Right cardiac atrium (tissue), 5 donors: ENCODE measurements at regions of chr5 and their contacts with region 1.

Region 1: GRCh38 chr5:14264604-14265316 is 121.6 kb downstream of the TRIO start:
- DNase-seq: peak; percentile 92 to 97 (median 96)
- ATAC-seq: peak; percentile 97
- H3K4me3 ChIP-seq: peak overlapping the region; percentile 23
- H3K27ac ChIP-seq: no peak overlapping the region
- H3K4me1 ChIP-seq: peaks cover 18% of the 10 kb centered on the region
- H3K27me3 ChIP-seq: no peaks in the 10 kb centered on the region

Region 2: GRCh38 chr5:14208071-14209021 is 56.4 kb before region 1 on chr5:
- intact Hi-C with region 1: loop called in 1 of 4 experiments (anchors 10 kb)
- DNase-seq: no peak
- ATAC-seq: peak in 1 of 2 donors; percentile 10
- H3K4me3 ChIP-seq: no peak overlapping the region
- H3K27ac ChIP-seq: no peak overlapping the region
- H3K4me1 ChIP-seq: peaks cover 15% of the 10 kb centered on the region
- H3K27me3 ChIP-seq: no peaks in the 10 kb centered on the region

Region 3: DNA sequence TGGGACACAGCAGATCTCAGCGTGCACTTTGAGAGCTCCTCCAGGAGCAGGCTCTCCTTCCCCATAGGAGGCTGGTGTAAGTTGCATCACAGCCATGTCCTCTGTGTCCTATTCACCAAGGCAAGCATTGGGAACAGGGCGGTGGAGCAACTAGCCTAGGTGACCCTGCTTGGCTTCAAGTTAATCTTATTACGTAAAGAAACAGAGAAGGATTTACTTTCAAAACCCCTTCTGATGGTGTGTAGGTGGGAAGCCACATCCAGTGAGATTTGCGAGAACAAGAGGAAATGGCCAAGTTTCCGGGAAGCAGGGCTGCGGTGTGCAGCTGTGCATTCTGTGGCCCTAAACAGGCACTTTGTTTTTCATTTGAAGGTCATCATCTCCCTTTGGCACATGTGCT is 41.4 kb before region 1 on chr5:
- intact Hi-C with region 1: no loop called
- DNase-seq: no peak
- ATAC-seq: no peak
- H3K4me3 ChIP-seq: no peak overlapping the region
- H3K27ac ChIP-seq: no peak overlapping the region
- H3K4me1 ChIP-seq: peaks cover 36% of the 10 kb centered on the region
- H3K27me3 ChIP-seq: no peaks in the 10 kb centered on the region

Region 4: GRCh38 chr5:14326035-14326903 is 61.5 kb after region 1 on chr5:
- intact Hi-C with region 1: no loop called
- DNase-seq: no peak
- ATAC-seq: peak; percentile 73 to 77
- H3K4me3 ChIP-seq: no peak overlapping the region
- H3K27ac ChIP-seq: no peak overlapping the region
- H3K4me1 ChIP-seq: no peaks in the 10 kb centered on the region
- H3K27me3 ChIP-seq: no peaks in the 10 kb centered on the region

Region 5: DNA sequence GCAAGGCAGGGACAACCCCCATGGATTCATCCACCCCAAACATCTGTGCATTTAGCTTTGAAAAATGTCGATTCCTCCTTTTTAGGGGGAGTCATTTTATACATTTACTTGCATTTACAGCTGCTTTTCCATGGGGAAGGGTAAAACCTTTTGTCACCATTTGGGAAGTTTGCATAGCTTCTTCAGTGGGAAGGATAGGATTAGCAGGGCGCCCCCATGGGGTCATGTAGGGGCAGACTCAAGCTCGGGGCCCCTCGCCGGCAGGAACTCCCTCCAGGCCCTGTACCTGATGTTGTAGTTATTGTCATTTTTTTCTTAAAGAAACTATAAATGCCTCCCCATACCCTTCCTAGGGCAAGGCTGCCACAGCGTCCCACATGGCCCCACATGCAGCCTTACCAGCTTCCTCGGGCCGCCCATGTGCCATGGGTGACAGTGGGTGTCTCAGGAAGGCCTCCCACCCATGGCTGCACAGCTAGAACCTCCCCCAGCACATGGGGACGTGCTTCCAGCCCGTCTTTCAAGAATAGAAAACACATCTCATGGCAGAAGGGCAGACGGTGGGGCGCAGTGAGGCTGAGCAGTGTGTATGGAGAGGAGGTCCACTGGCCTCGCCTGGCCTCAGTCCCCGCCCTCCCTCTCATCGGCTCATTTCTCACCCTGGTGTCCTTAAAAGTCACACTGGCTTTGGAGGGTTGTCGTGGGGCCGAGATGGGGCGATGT is 240.7 kb after region 1 on chr5:
- intact Hi-C with region 1: no loop called
- DNase-seq: peak in 1 of 3 donors; percentile 53
- ATAC-seq: peak in 1 of 2 donors; percentile 5
- H3K4me3 ChIP-seq: no peak overlapping the region
- H3K27ac ChIP-seq: no peak overlapping the region
- H3K4me1 ChIP-seq: no peaks in the 10 kb centered on the region
- H3K27me3 ChIP-seq: no peaks in the 10 kb centered on the region